Activated B cell treated with CpG ODN at 0.5 μM for 24 hours (primary cell): ENCODE measurements at regions of chr1 and their contacts with region 1.

Region 1: GRCh38 chr1:239951511-239952140 is 140.1 kb upstream of the FMN2 start:
- DNase-seq: no peak
- ATAC-seq: no peak
- H3K4me3 Mint-ChIP-seq: no peak overlapping the region
- H3K27ac Mint-ChIP-seq: no peak overlapping the region
- H3K4me1 Mint-ChIP-seq: no peaks in the 10 kb centered on the region
- H3K27me3 Mint-ChIP-seq: no peaks in the 10 kb centered on the region
- CTCF ChIP-seq: no peak

Region 2: GRCh38 chr1:239976130-239976968 is 24.7 kb after region 1 on chr1:
- CTCF ChIA-PET with region 1: interaction called, 8 read pairs
- POLR2A ChIA-PET with region 1: no interaction called
- intact Hi-C with region 1: loop called (anchors 1 kb)
- DNase-seq: no peak
- ATAC-seq: no peak
- H3K4me3 Mint-ChIP-seq: no peak overlapping the region
- H3K27ac Mint-ChIP-seq: no peak overlapping the region
- H3K4me1 Mint-ChIP-seq: no peaks in the 10 kb centered on the region
- H3K27me3 Mint-ChIP-seq: no peaks in the 10 kb centered on the region
- CTCF ChIP-seq: peak; percentile 72

Region 3: GRCh38 chr1:240217403-240217802 is 265.8 kb after region 1 on chr1:
- CTCF ChIA-PET with region 1: no interaction called
- POLR2A ChIA-PET with region 1: no interaction called
- intact Hi-C with region 1: no loop called
- DNase-seq: no peak
- ATAC-seq: no peak
- H3K4me3 Mint-ChIP-seq: no peak overlapping the region
- H3K27ac Mint-ChIP-seq: no peak overlapping the region
- H3K4me1 Mint-ChIP-seq: no peaks in the 10 kb centered on the region
- H3K27me3 Mint-ChIP-seq: no peaks in the 10 kb centered on the region
- CTCF ChIP-seq: no peak